Sigmoid colon (tissue), 7 donors: ENCODE measurements at regions of chr2 and their contacts with region 1.

Region 1: DNA sequence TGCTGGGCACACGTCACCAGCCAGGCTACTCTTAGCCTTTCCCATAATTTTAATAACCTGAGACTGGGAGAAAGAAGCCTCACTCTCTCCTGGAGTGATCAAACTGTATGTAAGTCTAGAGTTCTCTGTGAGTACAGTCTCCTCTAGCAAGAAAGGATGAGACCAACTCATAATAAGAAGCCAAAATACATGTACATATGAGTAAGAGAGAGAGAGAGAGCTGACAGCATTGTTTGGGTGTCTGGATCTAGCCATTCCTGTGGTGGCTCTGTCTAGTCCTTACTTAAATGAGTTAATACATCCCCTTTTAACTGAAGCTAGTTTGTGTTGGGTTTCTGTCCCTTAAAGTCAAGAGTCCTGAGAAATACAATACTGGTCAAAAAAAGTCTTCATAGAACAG is 26.0 kb upstream of the ANXA4 start:
- DNase-seq: no peak
- H3K4me3 ChIP-seq: no peak overlapping the region
- H3K27ac ChIP-seq: no peak overlapping the region
- H3K4me1 ChIP-seq: no peaks in the 10 kb centered on the region
- H3K27me3 ChIP-seq: no peaks in the 10 kb centered on the region
- CTCF ChIP-seq: no peak
- EP300 ChIP-seq: no peak
- POLR2A ChIP-seq: no peak

Region 2: GRCh38 chr2:69381337-69381737 is 334.6 kb before region 1 on chr2:
- intact Hi-C with region 1: loop called (anchors 5 kb)
- DNase-seq: no peak
- H3K4me3 ChIP-seq: no peak overlapping the region
- H3K27ac ChIP-seq: no peak overlapping the region
- H3K4me1 ChIP-seq: peaks cover 0 to 51% (median 15%) of the 10 kb centered on the region in 4 donors
- H3K27me3 ChIP-seq: no peaks in the 10 kb centered on the region
- CTCF ChIP-seq: no peak
- EP300 ChIP-seq: no peak
- POLR2A ChIP-seq: no peak

Region 3: DNA sequence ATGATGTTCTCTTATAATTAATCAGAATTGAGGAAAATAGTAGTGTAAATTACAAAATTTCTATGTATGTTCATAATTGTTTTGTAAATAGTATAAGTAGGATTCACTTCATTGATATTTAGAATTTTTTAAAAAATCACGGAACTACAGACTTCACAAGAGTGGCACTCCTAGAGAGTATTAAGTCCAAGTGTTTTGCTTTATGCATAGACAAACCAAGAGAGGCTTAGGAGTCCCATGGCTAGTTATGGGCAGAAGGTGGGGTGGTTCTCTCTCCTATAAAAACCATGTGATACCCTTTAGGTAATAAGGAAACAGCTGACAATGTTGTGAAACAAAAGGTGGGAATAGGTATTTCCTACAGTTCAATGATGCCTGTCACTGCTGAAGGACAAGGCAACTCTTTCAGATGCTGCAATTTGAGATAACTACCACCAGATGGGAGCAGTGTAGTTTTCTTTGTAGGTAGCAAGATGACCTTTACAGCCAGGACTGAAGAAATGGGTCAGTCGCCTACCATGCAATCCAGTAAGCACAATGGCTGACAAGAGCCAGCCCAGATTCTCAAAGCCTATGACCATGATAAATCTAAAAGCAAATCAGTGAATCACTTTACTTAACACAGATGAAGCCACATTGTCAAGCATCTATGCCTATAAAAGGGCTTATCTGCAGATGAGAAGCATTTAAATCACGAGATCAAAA is 156.4 kb before region 1 on chr2:
- intact Hi-C with region 1: loop called (anchors 2 kb)
- DNase-seq: no peak
- H3K4me3 ChIP-seq: no peak overlapping the region
- H3K27ac ChIP-seq: no peak overlapping the region
- H3K4me1 ChIP-seq: peaks cover 0 to 22% (median 11%) of the 10 kb centered on the region in 4 donors
- H3K27me3 ChIP-seq: no peaks in the 10 kb centered on the region
- CTCF ChIP-seq: peak; percentile 12 to 55 (median 42)
- EP300 ChIP-seq: no peak
- POLR2A ChIP-seq: no peak